ENCODE measurements at regions of chr18 and their contacts with region 1.

Region 1: DNA sequence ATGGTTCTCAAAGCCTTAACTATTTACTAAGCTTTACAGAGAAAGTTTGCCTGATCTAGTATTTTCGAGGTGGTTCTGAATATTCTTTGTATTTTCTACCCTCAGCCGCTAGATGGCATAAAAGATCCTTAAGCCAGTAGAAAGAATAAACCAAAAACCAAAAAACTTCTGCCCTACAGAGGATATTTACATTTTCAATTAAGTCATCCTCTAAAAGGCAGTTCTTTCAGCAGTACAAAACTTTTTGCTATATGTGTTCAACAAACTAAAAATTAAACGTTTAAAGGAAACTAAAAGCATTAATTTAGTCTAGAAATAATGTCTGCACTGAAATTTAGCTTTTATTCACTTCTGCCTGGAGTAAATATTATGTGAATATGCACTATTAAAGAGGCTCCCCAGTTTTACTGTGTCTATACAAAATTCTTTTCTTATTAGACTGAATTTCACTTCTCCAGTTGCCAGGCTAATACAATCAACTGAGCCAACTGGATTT is 297.5 kb downstream of the PIEZO2 start:
- DNase-seq: peak in 2 of 5 donors; percentile 72 to 86
- H3K4me3 ChIP-seq: no peak overlapping the region
- H3K27ac ChIP-seq: no peak overlapping the region
- H3K4me1 ChIP-seq: no peaks in the 10 kb centered on the region
- H3K27me3 ChIP-seq: no peaks in the 10 kb centered on the region
- CTCF ChIP-seq: peak; percentile 75

Region 2: GRCh38 chr18:11040823-11041656 is 189.2 kb after region 1 on chr18:
- intact Hi-C with region 1: loop called (anchors 10 kb)
- DNase-seq: peak in 4 of 5 donors; percentile 46 to 79 (median 68)
- H3K4me3 ChIP-seq: no peak overlapping the region
- H3K27ac ChIP-seq: no peak overlapping the region
- H3K4me1 ChIP-seq: no peaks in the 10 kb centered on the region
- H3K27me3 ChIP-seq: no peaks in the 10 kb centered on the region
- CTCF ChIP-seq: peak; percentile 67